AG04450 (cell line): ENCODE measurements at regions of chr1 and their contacts with region 1.

Region 1: DNA sequence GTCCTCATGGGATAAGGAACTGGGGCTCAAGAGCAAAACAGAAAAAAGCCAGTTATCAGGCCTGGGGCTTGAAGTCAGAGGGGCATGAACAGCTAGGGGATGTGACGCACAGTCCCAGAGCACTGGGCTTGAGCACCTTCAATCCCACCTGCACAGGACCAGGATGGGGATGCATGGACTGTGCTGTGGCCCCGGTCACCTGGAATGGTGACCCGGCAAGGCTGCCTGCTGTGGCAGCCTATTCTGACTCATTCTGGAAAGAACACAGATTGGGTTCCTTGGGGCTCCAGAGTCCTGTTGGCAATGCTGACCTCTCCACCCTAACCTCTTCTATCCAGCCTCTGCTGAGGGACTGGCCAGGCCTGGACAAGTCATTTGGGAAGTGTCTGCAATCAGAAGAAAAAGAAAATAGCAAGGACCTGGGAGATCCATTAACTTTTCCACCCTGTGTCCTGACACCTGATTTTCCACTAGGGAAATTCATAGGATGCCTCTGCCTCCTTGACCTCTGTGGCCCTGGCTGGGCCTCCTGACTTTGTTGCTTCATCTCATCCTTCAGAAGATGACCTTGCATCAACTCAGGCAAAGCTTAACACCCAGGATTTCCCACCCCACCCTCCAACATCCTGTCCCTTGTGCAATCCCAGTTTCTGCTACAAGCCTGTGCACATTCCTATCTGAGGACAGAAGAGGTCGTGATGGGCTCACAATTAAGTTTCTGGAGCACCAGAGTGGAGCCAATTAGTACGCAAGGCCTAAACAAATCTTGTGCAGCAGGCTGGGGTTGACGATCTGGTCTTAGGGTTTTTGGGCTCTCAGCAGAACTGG is 17.9 kb upstream of the FMOD start:
- DNase-seq: no peak
- H3K4me3 ChIP-seq: no peak overlapping the region
- H3K27ac ChIP-seq: peak overlapping the region; percentile 11
- H3K27me3 ChIP-seq: peaks cover 15% of the 10 kb centered on the region
- CTCF ChIP-seq: peak; percentile 41

Region 2: DNA sequence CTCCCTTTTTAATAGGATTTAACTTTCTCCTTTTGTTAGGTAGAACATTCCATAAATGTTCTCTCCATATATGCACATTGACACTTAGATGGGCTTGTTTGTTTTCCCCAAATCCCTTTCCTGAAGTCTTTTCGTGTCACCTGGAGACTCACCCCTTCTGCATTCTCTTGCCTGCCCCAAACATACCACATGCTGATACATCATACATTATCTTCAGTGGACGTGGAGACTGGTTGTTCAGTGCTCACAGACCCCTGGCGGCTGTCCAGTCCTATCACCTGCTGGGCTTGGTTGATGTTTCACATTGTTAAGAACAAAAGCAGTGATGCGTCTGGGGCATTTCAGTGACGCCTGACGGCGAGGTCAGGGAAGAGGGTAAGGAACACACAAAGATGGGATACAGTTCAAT is 40.1 kb before region 1 on chr1:
- CTCF ChIA-PET with region 1: no interaction called
- POLR2A ChIA-PET with region 1: no interaction called
- DNase-seq: no peak
- H3K4me3 ChIP-seq: no peak overlapping the region
- H3K27ac ChIP-seq: no peak overlapping the region
- H3K27me3 ChIP-seq: peaks cover 44% of the 10 kb centered on the region
- CTCF ChIP-seq: no peak

Region 3: GRCh38 chr1:203395751-203396150 is 26.9 kb after region 1 on chr1:
- CTCF ChIA-PET with region 1: no interaction called
- POLR2A ChIA-PET with region 1: no interaction called
- DNase-seq: no peak
- H3K4me3 ChIP-seq: no peak overlapping the region; the same call in 1 of the 2 replicates
- H3K27ac ChIP-seq: no peak overlapping the region
- H3K27me3 ChIP-seq: peaks cover 3% of the 10 kb centered on the region
- CTCF ChIP-seq: peak; percentile 21; the same call in 1 of the 2 replicates

Region 4: GRCh38 chr1:203440771-203441170 is 71.9 kb after region 1 on chr1:
- CTCF ChIA-PET with region 1: interaction called, 12 read pairs
- POLR2A ChIA-PET with region 1: no interaction called
- DNase-seq: peak; percentile 37
- H3K4me3 ChIP-seq: no peak overlapping the region
- H3K27ac ChIP-seq: no peak overlapping the region
- H3K27me3 ChIP-seq: peaks cover 44% of the 10 kb centered on the region
- CTCF ChIP-seq: peak; percentile 70